Activated B cell treated with CpG ODN at 0.5 μM for 24 hours (primary cell): ENCODE measurements at regions of chr11 and their contacts with region 1.

Region 1: GRCh38 chr11:17389211-17389956 is 925 bp upstream of the KCNJ11 start:
- DNase-seq: peak; percentile 85
- ATAC-seq: peak; percentile 90
- H3K4me3 Mint-ChIP-seq: peak overlapping the region; percentile 84
- H3K27ac Mint-ChIP-seq: peak overlapping the region; percentile 59
- H3K4me1 Mint-ChIP-seq: peaks cover 18% of the 10 kb centered on the region
- H3K27me3 Mint-ChIP-seq: no peaks in the 10 kb centered on the region
- CTCF ChIP-seq: no peak

Region 2: DNA sequence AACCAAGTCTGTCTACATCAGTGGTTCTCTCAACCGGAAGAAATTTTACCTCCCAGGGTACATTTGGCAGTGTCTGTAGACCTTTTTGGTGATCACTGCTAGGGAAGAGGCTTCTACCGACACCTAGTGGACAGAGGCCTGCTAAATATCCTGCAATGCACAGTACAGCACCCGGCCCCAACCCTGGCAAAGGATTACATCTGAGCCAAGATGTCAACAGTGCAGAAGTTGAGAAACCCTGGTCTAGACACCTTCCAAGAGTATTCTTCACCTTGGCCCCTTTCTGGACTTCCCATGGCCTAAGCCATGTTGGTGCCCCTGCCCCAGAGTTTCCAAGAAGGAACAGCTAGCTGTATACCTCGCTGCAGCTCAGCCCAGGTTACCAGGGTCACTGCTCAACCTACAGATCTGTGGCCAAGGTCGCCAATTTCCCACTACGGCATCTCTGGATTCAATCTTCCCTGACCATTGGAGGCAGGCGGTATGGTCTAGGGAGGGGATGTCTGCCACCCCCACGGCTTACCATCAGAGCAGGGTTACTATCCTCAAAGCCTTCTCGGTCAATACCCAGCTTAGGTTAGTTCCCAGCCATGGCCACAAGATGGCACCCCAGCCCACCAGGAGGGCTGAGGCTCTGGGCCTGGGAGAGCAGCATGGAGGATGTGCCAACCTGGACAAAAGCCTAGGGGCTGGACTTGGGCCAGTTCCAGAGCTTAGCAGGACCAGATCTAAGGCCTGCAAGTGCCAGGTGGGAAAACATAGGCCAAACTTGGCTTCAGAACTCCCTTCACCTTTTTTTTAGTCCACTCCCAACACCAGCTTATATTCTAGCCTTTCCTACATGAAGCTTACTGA is 341.5 kb after region 1 on chr11:
- CTCF ChIA-PET with region 1: no interaction called
- POLR2A ChIA-PET with region 1: no interaction called
- intact Hi-C with region 1: loop called (anchors 5 kb)
- DNase-seq: peak; percentile 42
- ATAC-seq: peak; percentile 73
- H3K4me3 Mint-ChIP-seq: no peak overlapping the region
- H3K27ac Mint-ChIP-seq: no peak overlapping the region
- H3K4me1 Mint-ChIP-seq: peaks cover 5% of the 10 kb centered on the region
- H3K27me3 Mint-ChIP-seq: peaks cover 39% of the 10 kb centered on the region
- CTCF ChIP-seq: no peak